Activated naive CD4-positive, alpha-beta T cell treated with anti-CD3 and anti-CD28 coated beads for 36 hours (primary cell): ENCODE measurements at regions of chr4 and their contacts with region 1.

Region 1: GRCh38 chr4:102826890-102827673 is at the start of gene UBE2D3:
- DNase-seq: peak; percentile 95
- H3K4me3 Mint-ChIP-seq: no peak within 1 kb of the TSS
- H3K27ac Mint-ChIP-seq: no peak within 1 kb of the TSS
- H3K4me1 Mint-ChIP-seq: peaks cover 27% of the 10 kb centered on the region
- H3K27me3 Mint-ChIP-seq: no peaks in the 10 kb centered on the region
- total RNA-seq, gene UBE2D3: 447 to 450 TPM

Region 2: DNA sequence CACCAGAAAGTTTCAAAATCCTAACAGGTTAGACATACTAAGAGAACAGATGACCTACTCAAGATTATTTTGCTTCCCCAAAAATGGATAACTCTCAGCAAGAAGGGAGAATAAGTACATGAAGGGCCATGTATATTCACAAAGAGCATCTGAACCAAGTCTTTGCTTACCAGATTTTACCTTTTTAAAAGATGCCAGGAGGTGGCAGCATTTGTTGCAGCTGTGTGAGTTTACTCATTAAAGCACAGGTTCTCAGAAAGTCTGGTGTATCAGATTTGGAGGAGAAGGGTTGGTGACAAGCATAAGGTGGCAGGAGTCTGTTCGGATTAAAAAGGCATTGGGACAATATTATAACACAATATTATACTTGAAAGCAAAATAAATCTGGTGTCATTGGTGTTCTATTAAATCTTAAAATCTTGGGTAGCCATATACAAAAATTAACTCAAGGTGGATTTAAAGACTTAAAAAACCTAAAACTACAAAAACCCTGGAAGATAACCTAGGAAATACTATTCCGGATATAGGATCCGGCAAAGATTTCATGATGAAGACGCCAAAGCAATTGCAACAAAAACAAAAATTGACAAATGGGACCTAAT is 377.2 kb before region 1 on chr4:
- CTCF ChIA-PET with region 1: no interaction called
- intact Hi-C with region 1: loop called (anchors 2 kb)
- DNase-seq: peak; percentile 76
- H3K4me3 Mint-ChIP-seq: no peak overlapping the region
- H3K27ac Mint-ChIP-seq: no peak overlapping the region
- H3K4me1 Mint-ChIP-seq: peaks cover 18% of the 10 kb centered on the region
- H3K27me3 Mint-ChIP-seq: no peaks in the 10 kb centered on the region

Region 3: GRCh38 chr4:102554482-102554881 is 272.6 kb before region 1 on chr4:
- CTCF ChIA-PET with region 1: no interaction called
- intact Hi-C with region 1: no loop called
- DNase-seq: no peak
- H3K4me3 Mint-ChIP-seq: no peak overlapping the region
- H3K27ac Mint-ChIP-seq: no peak overlapping the region
- H3K4me1 Mint-ChIP-seq: peaks cover 41% of the 10 kb centered on the region
- H3K27me3 Mint-ChIP-seq: no peaks in the 10 kb centered on the region

Region 4: GRCh38 chr4:102627831-102628523 is 199.1 kb before region 1 on chr4:
- CTCF ChIA-PET with region 1: no interaction called
- intact Hi-C with region 1: loop called (anchors 1 kb)
- DNase-seq: peak; percentile 62
- H3K4me3 Mint-ChIP-seq: peak overlapping the region; percentile 22
- H3K27ac Mint-ChIP-seq: peak overlapping the region; percentile 54
- H3K4me1 Mint-ChIP-seq: peaks cover 75% of the 10 kb centered on the region
- H3K27me3 Mint-ChIP-seq: no peaks in the 10 kb centered on the region

Region 5: GRCh38 chr4:102809190-102809589 is 17.9 kb before region 1 on chr4:
- CTCF ChIA-PET with region 1: interaction called, 3 read pairs
- intact Hi-C with region 1: loop called (anchors 1 kb)
- DNase-seq: no peak
- H3K4me3 Mint-ChIP-seq: no peak overlapping the region
- H3K27ac Mint-ChIP-seq: peak overlapping the region; percentile 83
- H3K4me1 Mint-ChIP-seq: peaks cover 75% of the 10 kb centered on the region
- H3K27me3 Mint-ChIP-seq: no peaks in the 10 kb centered on the region

Region 6: GRCh38 chr4:102878901-102879300 is 51.8 kb after region 1 on chr4:
- CTCF ChIA-PET with region 1: no interaction called
- intact Hi-C with region 1: no loop called
- DNase-seq: no peak
- H3K4me3 Mint-ChIP-seq: no peak overlapping the region
- H3K27ac Mint-ChIP-seq: no peak overlapping the region
- H3K4me1 Mint-ChIP-seq: peaks cover 8% of the 10 kb centered on the region
- H3K27me3 Mint-ChIP-seq: no peaks in the 10 kb centered on the region

Region 7: DNA sequence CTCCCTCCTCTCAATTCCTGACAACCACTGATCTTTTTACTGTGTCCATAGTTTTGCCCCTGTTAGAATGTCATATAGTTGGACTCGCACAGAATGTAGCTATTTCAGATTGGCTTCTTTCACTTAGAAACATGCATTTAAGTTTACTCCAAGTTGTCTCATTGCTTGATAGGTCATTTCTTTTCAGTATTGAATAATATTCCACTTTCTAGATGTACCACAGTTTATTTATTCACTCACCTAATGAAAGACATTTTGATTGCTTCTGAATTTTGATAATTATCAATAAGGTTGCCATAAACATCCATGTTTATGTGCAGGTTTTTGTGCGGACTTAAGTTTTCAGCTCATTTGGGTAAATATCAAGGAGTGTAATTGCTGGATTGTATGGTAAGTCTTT is 153.9 kb after region 1 on chr4:
- CTCF ChIA-PET with region 1: no interaction called
- intact Hi-C with region 1: no loop called
- DNase-seq: no peak
- H3K4me3 Mint-ChIP-seq: no peak overlapping the region
- H3K27ac Mint-ChIP-seq: no peak overlapping the region
- H3K4me1 Mint-ChIP-seq: no peaks in the 10 kb centered on the region
- H3K27me3 Mint-ChIP-seq: no peaks in the 10 kb centered on the region

Region 8: DNA sequence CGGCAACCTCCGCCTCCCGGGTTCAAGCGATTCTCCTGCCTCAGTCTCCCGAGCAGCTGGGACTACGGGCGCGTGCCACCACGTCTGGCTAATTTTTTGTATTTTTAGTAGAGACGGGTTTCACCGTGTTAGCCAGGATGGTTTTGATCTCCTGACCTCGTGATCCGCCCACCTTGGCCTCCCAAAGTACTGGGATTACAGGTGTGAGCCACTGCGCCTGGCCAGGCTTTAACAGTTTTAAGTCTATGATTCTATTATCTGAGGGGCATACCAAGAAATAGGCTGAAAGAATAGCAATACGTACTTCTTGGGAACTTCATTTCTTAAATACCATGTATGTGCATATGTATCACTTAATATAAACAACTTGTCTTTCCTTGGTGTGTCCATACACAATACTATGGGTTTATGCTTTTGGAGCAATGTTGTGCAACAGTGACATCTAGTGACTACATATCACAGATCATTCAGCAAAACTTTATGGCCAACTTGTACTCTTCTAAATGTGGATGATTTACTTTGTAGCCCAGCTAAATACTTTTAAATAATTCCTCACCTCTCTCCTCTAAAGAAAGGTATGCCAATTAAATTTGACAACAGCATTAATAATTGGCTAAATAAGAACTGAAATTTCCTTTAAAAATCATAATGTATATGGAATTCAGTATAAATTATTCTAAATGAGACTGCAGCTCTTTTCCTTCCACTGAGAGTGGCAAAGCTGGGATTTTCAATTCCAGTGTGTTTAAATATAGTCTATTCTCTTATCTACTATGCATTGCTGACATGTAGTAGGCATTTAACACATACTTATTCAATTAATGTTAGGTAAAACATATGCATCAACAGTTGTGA is 182.0 kb after region 1 on chr4:
- CTCF ChIA-PET with region 1: interaction called, 3 read pairs
- intact Hi-C with region 1: loop called (anchors 2 kb)
- DNase-seq: peak; percentile 22
- H3K4me3 Mint-ChIP-seq: no peak overlapping the region
- H3K27ac Mint-ChIP-seq: no peak overlapping the region
- H3K4me1 Mint-ChIP-seq: no peaks in the 10 kb centered on the region
- H3K27me3 Mint-ChIP-seq: no peaks in the 10 kb centered on the region

Region 9: DNA sequence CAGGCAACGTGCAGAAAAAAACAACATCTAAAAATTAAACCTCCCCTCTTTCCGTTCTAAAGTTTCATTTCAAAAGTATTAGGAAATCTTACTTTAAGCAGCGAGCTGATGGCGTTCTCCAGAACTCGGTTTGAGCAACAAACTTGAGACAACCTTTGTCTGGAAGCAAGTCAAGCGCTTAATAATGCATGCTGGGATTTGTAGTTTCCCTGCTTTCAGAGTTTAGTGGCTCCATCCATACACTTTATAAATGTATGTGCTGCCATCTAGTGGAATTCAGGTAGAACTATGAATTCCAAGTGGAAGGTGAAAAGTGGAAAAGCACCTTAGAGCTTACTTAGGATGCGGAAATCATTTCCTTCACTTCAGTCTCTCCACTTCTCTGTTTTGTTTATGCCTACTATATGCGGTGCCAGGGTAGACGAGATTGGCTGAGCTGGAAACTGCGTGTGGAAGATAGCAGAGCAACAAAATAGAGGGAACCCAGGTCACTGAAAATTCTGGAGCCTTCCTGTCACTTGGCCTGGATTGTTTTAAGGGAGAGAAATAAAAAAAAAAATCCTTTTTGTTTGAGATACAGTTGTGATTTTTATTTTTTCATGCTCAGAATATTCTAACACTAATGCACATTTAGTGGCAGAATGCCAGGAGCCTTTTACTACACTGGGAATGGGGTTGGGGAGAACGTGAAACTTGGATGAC is 272.8 kb after region 1 on chr4 and contains the start of gene BDH2:
- CTCF ChIA-PET with region 1: no interaction called
- intact Hi-C with region 1: loop called (anchors 1 kb)
- DNase-seq: peak; percentile 65
- H3K4me3 Mint-ChIP-seq: peak within 1 kb of the TSS; percentile 79
- H3K27ac Mint-ChIP-seq: peak within 1 kb of the TSS; percentile 81
- H3K4me1 Mint-ChIP-seq: peaks cover 26% of the 10 kb centered on the region
- H3K27me3 Mint-ChIP-seq: no peaks in the 10 kb centered on the region
- total RNA-seq, gene BDH2: 16.2 to 20.4 TPM